CD4-positive, alpha-beta memory T cell (primary cell): ENCODE measurements at regions of chr17 and their contacts with region 1.

Region 1: GRCh38 chr17:40317880-40318829 is 9.2 kb downstream of the RARA start:
- DNase-seq: peak; percentile 89 to 93 (median 91)
- H3K4me3 ChIP-seq: peak overlapping the region; percentile 80 to 91
- H3K4me3 Mint-ChIP-seq: peak overlapping the region; percentile 91 to 98 (median 96)
- H3K27ac ChIP-seq: peak overlapping the region; percentile 99
- H3K27ac Mint-ChIP-seq: peak overlapping the region; percentile 96 to 100 (median 99)
- H3K4me1 ChIP-seq: peaks cover 74% of the 10 kb centered on the region
- H3K4me1 Mint-ChIP-seq: peaks cover 42 to 95% (median 61%) of the 10 kb centered on the region in 4 donors
- H3K27me3 ChIP-seq: no peaks in the 10 kb centered on the region
- H3K27me3 Mint-ChIP-seq: peaks cover 1 to 3% of the 10 kb centered on the region in 2 donors

Region 2: GRCh38 chr17:39769974-39770587 is 548.1 kb before region 1 on chr17:
- CTCF ChIA-PET with region 1: no interaction called
- POLR2A ChIA-PET with region 1: no interaction called
- intact Hi-C with region 1: loop called (anchors 5 kb)
- DNase-seq: peak; percentile 67 to 92 (median 72)
- H3K4me3 ChIP-seq: peak overlapping the region in 1 of 2 donors; percentile 6
- H3K4me3 Mint-ChIP-seq: peak overlapping the region; percentile 33 to 96 (median 66)
- H3K27ac ChIP-seq: peak overlapping the region; percentile 77
- H3K27ac Mint-ChIP-seq: peak overlapping the region; percentile 88 to 98 (median 95)
- H3K4me1 ChIP-seq: peaks cover 100% of the 10 kb centered on the region
- H3K4me1 Mint-ChIP-seq: peaks cover 81 to 100% (median 89%) of the 10 kb centered on the region in 4 donors
- H3K27me3 ChIP-seq: no peaks in the 10 kb centered on the region
- H3K27me3 Mint-ChIP-seq: no peaks in the 10 kb centered on the region

Region 3: GRCh38 chr17:40303009-40303657 is 15.0 kb before region 1 on chr17:
- CTCF ChIA-PET with region 1: interaction called, 252 read pairs
- POLR2A ChIA-PET with region 1: interaction called, 367 read pairs
- intact Hi-C with region 1: loop called (anchors 1 kb)
- DNase-seq: peak; percentile 62 to 70 (median 66)
- H3K4me3 ChIP-seq: no peak overlapping the region
- H3K4me3 Mint-ChIP-seq: no peak overlapping the region
- H3K27ac ChIP-seq: no peak overlapping the region
- H3K27ac Mint-ChIP-seq: peak overlapping the region in 5 of 7 donors; percentile 2 to 53 (median 13)
- H3K4me1 ChIP-seq: peaks cover 37% of the 10 kb centered on the region
- H3K4me1 Mint-ChIP-seq: peaks cover 14 to 17% (median 15%) of the 10 kb centered on the region in 4 donors
- H3K27me3 ChIP-seq: no peaks in the 10 kb centered on the region
- H3K27me3 Mint-ChIP-seq: no peaks in the 10 kb centered on the region

Region 4: DNA sequence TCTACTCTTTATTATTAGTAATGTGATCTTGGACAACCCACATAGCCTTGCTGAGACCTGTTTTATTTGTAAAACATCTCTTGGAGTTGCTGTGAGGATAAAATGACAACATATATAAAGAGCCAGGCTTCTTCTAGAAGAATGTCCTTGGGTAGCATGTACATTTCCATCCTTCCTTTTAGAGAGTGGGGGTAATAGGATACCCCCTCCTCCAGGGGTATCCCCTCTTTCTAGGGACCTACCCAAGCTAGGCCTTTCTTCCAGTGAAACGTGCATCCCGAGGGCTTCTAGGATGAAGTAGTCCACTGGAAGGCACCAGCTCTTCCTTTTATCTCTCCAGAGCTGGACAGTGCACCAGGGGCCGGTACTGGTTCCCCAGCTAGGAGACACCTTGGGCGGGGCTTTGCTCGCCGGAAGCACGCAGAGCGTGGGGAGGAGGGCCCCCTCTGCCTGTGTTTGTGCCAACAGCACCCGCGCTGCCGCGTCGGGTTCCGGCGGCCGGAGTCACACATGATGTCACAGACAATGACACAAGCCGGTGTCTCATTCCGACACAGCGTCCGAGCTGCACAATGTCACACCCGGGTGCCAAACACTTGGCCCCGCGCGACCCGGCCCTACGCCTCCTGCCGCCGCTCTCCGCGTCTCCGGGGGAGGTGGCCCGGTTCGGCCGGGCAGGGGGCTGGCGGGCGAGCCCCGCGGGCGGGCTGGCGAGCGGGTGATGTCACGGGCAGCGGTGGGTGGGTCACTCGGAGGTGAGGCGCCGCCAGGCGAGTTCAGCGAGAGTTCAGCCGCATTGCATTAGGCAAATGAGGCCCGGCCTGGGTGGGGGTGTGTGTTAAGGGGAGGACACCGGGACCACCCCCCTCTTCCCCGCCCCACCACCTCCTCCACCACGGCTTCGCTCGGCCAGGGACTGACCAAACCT is 23.0 kb after region 1 on chr17:
- CTCF ChIA-PET with region 1: interaction called, 46 read pairs
- POLR2A ChIA-PET with region 1: interaction called, 1,054 read pairs
- intact Hi-C with region 1: loop called (anchors 1 kb)
- DNase-seq: peak; percentile 84 to 95 (median 87)
- H3K4me3 ChIP-seq: peak overlapping the region; percentile 51 to 69
- H3K4me3 Mint-ChIP-seq: peak overlapping the region; percentile 84 to 88 (median 86)
- H3K27ac ChIP-seq: peak overlapping the region; percentile 90
- H3K27ac Mint-ChIP-seq: peak overlapping the region; percentile 90 to 99 (median 98)
- H3K4me1 ChIP-seq: peaks cover 85% of the 10 kb centered on the region
- H3K4me1 Mint-ChIP-seq: peaks cover 40 to 81% (median 69%) of the 10 kb centered on the region in 4 donors
- H3K27me3 ChIP-seq: no peaks in the 10 kb centered on the region
- H3K27me3 Mint-ChIP-seq: no peaks in the 10 kb centered on the region

Region 5: DNA sequence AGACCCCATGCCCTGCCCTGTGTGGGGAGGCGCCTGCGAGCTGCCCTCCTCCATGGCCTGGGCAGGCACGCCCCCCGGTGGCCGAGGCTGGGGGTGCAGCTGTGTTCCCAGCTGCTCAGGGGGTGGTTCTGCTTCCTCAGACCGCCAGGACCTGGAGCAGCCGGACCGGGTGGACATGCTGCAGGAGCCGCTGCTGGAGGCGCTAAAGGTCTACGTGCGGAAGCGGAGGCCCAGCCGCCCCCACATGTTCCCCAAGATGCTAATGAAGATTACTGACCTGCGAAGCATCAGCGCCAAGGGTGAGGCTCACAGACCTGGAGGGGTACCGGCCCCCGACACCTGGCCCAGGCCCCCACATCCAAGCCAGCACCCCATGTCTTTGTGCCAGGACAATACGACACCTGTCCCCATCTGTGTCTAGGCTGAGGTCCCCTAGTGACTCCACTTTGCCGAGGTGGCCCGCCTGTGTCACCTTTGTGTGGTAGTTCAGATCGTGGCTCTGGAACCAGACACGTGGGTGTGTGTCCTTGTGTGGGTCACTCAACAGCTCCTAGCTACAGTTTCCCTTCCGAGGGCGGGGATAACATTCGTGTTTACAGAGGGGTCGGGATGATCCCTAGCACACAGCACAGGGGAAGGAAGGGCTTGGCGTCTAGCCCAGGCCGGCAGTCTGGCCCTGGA is 37.1 kb after region 1 on chr17:
- CTCF ChIA-PET with region 1: interaction called, 573 read pairs
- POLR2A ChIA-PET with region 1: interaction called, 1,054 read pairs
- intact Hi-C with region 1: no loop called
- DNase-seq: peak; percentile 70 to 81 (median 71)
- H3K4me3 ChIP-seq: no peak overlapping the region
- H3K4me3 Mint-ChIP-seq: no peak overlapping the region
- H3K27ac ChIP-seq: no peak overlapping the region
- H3K27ac Mint-ChIP-seq: peak overlapping the region in 6 of 7 donors; percentile 29 to 86 (median 46)
- H3K4me1 ChIP-seq: peaks cover 9% of the 10 kb centered on the region
- H3K4me1 Mint-ChIP-seq: peaks cover 11 to 25% (median 12%) of the 10 kb centered on the region in 4 donors
- H3K27me3 ChIP-seq: no peaks in the 10 kb centered on the region
- H3K27me3 Mint-ChIP-seq: no peaks in the 10 kb centered on the region

Region 6: DNA sequence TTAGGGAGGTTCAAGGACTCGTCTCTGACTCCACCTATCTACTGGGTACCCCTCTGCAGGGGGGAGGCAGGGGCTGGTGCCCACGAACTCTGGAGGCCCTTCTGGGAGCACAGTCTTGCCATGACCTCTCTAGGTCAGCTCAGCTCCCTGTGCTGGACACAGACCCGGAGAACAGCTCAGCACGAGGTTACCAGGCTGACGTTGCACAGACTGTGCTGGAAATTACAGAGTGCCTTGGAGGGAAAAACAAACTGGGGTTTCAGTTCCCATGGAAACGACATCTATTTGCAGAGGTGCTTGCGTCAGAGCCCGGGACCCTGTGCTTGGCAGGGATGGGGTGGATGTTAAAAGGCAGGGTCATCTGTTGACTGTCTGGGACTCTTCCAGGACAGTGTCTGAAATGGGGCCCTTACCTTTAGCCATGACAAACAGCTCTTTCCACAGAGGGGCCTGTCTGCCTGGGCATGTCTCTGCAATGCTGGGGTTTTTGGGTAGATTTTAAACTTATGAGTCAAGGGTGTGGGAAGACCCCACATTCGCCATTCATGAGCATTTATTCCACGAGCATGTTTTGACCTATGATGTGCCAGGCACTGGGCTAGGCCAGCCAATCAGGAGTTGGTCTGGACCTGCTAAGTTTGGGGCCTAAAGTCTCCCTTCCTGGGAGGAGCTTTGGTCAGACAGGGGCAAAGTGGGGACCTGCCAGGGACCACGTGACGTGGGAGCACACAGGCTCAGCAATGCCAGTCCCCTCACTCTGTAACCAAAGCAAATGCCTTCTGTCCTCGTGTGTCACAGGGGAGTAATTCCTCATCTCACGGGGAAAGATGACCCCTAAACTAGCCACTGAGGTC is 224.6 kb after region 1 on chr17:
- CTCF ChIA-PET with region 1: interaction called, 3 read pairs
- POLR2A ChIA-PET with region 1: interaction called, 25 read pairs
- intact Hi-C with region 1: no loop called
- DNase-seq: peak in 4 of 5 donors; percentile 37 to 82 (median 50)
- H3K4me3 ChIP-seq: no peak overlapping the region
- H3K4me3 Mint-ChIP-seq: peak overlapping the region in 6 of 8 donors; percentile 67 to 94 (median 88)
- H3K27ac ChIP-seq: peak overlapping the region; percentile 69
- H3K27ac Mint-ChIP-seq: peak overlapping the region; percentile 94 to 100 (median 99)
- H3K4me1 ChIP-seq: peaks cover 90% of the 10 kb centered on the region
- H3K4me1 Mint-ChIP-seq: peaks cover 60 to 91% (median 75%) of the 10 kb centered on the region in 4 donors
- H3K27me3 ChIP-seq: no peaks in the 10 kb centered on the region
- H3K27me3 Mint-ChIP-seq: peaks cover 0 to 4% of the 10 kb centered on the region in 2 donors